Esophagus squamous epithelium (tissue), 5 donors: ENCODE measurements at regions of chr4 and their contacts with region 1.

Region 1: DNA sequence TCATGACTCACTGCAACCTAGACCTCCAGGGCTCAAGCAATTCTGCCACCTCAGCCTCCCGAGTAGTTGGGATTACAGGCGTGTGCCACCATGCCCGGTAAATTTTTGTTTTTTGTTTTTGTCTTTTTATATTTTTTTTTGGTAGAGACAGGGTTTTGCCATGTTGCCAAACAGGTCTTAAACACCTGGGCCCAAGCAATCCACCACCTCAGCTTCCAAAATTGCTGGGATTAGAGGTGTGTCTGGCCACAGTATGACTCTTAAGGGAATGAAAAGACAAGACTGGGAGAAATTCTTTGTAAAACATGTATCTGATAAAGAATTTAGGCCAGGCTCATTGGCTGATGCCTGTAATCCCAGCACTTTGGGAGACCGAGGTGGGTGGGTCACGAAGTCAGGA is 29.2 kb upstream of the PDGFRA start:
- DNase-seq: no peak
- H3K4me3 ChIP-seq: no peak overlapping the region
- H3K27ac ChIP-seq: no peak overlapping the region
- H3K4me1 ChIP-seq: no peaks in the 10 kb centered on the region
- H3K27me3 ChIP-seq: no peaks in the 10 kb centered on the region
- CTCF ChIP-seq: no peak
- POLR2A ChIP-seq: no peak

Region 2: DNA sequence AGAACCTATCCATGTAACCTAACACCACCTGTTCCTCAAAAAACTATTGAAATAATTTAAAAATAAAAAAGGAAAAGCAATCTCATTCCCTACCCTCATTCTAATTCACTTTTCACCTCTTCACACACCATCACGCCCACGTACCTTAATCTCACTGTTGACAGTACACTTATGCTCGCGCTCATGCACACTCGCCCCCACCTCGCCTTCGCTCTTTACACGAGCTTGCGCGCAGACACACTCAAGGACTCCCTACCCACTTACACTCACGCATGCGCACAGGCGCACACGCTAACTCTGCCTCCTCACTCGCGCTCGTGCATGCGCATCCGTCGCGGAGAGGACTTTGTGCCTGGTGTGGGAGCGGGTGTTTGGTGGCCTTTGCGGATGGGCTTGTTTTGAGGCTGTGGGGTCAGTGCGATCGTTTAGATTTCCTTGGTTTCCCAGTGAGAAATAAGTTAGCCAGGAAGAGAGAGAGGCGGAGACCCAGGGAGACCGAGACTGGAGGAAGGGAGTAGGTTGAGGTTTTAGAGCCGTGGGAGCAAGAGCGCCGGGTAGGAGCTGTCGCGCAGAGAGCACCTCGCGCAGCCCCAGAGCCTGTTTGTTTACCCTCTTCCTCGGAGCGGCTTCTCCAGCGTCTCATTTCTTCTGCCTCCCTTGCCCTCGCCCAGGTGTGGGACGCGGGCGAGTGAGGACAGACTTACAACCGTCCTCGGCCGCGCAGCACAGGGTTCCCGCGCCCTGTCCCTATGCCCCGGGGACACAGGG is 108.1 kb before region 1 on chr4:
- intact Hi-C with region 1: loop called (anchors 10 kb)
- DNase-seq: no peak
- H3K4me3 ChIP-seq: peak overlapping the region; percentile 38 to 66 (median 50)
- H3K27ac ChIP-seq: peak overlapping the region in 3 of 4 donors; percentile 37 to 52 (median 43)
- H3K4me1 ChIP-seq: peaks cover 0 to 34% (median 12%) of the 10 kb centered on the region in 3 donors
- H3K27me3 ChIP-seq: peaks cover 0 to 79% (median 14%) of the 10 kb centered on the region in 4 donors
- CTCF ChIP-seq: no peak
- POLR2A ChIP-seq: peak in 1 of 4 donors; percentile 14

Region 3: GRCh38 chr4:54596201-54596600 is 396.3 kb after region 1 on chr4:
- intact Hi-C with region 1: no loop called
- DNase-seq: no peak
- H3K4me3 ChIP-seq: no peak overlapping the region
- H3K27ac ChIP-seq: no peak overlapping the region
- H3K4me1 ChIP-seq: no peaks in the 10 kb centered on the region
- H3K27me3 ChIP-seq: no peaks in the 10 kb centered on the region
- CTCF ChIP-seq: no peak
- POLR2A ChIP-seq: no peak